PC-9 (cell line): ENCODE measurements at regions of chr11 and their contacts with region 1.

Region 1: GRCh38 chr11:2420502-2421225 is 20.1 kb downstream of the TSSC4 start:
- DNase-seq: peak; percentile 37 to 54
- H3K4me3 ChIP-seq: no peak overlapping the region
- H3K27ac ChIP-seq: no peak overlapping the region
- H3K4me1 ChIP-seq: no peaks in the 10 kb centered on the region
- H3K27me3 ChIP-seq: peaks cover 10% of the 10 kb centered on the region; the same call in 1 of the 2 replicates
- CTCF ChIP-seq: peak; percentile 77

Region 2: DNA sequence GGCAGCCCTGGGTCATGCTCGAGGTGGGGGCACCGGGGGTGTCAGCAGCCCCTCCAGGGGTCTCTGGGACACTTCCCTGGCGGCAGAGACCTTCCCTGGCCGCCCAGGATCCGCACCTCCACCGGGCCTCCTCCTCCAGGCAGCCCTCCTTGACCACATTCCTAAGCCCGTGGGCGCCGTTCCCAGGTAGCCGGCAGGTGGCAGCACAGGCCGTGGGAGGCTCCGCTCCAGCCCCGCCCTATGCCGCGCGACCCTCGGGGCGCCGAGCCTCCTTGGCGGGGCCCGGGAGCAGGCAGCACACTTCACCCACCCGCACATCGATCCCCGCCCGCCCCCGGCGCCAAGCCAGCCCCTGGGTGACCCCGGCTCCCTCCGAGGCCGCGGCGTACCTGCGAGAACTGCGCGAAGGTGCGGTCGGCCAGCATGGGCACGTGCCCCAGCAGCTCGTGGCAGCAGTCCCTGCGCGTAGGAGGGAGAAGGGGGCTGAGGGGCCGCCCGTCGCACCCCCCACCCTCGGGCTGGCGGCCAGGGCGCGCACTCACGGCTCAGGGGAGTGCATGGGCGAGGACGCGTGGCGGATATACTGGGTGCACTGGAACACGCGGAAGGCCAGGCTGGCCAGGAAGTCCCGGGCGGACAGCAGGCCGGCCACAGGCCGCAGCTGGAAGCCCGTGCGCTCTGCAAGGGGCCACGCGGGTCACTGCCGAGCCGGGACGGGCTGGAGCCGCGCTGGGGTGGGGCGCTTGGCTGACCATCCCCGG is 254.4 kb before region 1 on chr11:
- CTCF ChIA-PET with region 1: no interaction called
- POLR2A ChIA-PET with region 1: no interaction called
- intact Hi-C with region 1: loop called (anchors 5 kb)
- DNase-seq: no peak
- H3K4me3 ChIP-seq: no peak overlapping the region
- H3K27ac ChIP-seq: no peak overlapping the region
- H3K4me1 ChIP-seq: peaks cover 42% of the 10 kb centered on the region
- H3K27me3 ChIP-seq: no peaks in the 10 kb centered on the region
- CTCF ChIP-seq: peak; percentile 69

Region 3: GRCh38 chr11:2305140-2305840 is 115.4 kb before region 1 on chr11:
- CTCF ChIA-PET with region 1: interaction called, 29 read pairs
- POLR2A ChIA-PET with region 1: no interaction called
- intact Hi-C with region 1: loop called (anchors 1 kb)
- DNase-seq: peak in 1 of 2 experiments; percentile 64
- H3K4me3 ChIP-seq: no peak overlapping the region
- H3K27ac ChIP-seq: no peak overlapping the region
- H3K4me1 ChIP-seq: no peaks in the 10 kb centered on the region
- H3K27me3 ChIP-seq: no peaks in the 10 kb centered on the region
- CTCF ChIP-seq: peak; percentile 83

Region 4: DNA sequence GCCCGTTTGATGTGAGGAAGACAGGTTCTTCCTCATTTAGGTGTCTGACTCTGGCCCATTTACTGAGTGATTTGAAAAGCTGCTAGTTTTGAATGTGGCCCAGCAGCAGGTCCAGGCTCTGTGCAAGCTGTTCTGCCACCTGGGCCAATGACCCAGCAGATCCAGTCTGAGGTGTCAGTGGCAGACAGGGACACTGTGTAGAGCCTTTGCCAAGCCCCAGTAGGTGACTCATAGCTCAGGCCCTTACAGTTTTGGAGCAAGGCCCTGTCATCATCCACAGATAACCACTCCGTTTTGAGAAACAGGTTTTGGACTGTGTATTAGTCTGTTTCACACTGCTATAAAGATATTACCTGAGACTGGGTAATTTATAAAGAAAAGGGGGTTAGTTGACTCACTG is 94.9 kb before region 1 on chr11:
- CTCF ChIA-PET with region 1: no interaction called
- POLR2A ChIA-PET with region 1: no interaction called
- intact Hi-C with region 1: no loop called
- DNase-seq: peak; percentile 50 to 58
- H3K4me3 ChIP-seq: no peak overlapping the region
- H3K27ac ChIP-seq: no peak overlapping the region; the same call in 1 of the 2 replicates
- H3K4me1 ChIP-seq: no peaks in the 10 kb centered on the region
- H3K27me3 ChIP-seq: no peaks in the 10 kb centered on the region
- CTCF ChIP-seq: no peak

Region 5: GRCh38 chr11:2389377-2390026 is 31.2 kb before region 1 on chr11:
- CTCF ChIA-PET with region 1: no interaction called
- POLR2A ChIA-PET with region 1: no interaction called
- intact Hi-C with region 1: no loop called
- DNase-seq: no peak
- H3K4me3 ChIP-seq: no peak overlapping the region
- H3K27ac ChIP-seq: no peak overlapping the region
- H3K4me1 ChIP-seq: 0 out of 2 replicates have a peak, but pooled peaks cover 7% of the 10 kb centered on the region
- H3K27me3 ChIP-seq: no peaks in the 10 kb centered on the region
- CTCF ChIP-seq: no peak

Region 6: DNA sequence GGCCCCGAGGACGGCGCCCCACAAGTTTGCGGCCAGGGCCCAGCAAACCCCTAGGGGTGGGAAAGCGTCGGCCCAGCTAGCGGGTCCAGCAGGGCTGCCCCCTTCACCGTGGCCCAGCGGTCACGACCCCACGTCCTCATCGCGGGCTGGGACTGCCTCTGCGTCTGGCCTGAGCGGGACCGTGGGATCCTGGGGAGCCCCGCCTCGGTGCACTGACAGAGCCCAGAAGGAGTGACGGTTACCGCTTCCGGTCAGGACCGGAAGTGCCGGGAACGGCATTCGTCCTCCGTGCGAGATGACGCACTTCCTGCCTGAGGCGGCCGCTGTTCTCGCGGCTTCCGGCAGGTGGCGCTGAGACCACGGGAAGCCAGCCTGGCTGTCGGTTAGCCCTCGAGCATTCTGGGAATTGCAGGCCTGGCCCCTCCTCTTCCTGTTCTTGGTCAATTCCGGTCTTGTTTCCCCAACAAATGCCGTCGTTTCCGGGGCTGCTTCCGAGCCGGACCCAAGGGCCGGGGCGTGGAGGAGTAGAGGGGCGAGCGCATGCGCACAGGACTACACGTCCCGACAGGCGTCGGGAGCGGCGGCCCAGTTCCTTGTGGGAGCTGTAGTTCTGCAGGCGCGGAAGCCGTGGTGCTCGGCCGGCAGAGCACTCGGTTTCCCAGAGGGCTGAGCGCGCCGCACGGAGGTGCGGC is 20.4 kb before region 1 on chr11 and contains the start of gene TSSC4:
- CTCF ChIA-PET with region 1: no interaction called
- POLR2A ChIA-PET with region 1: no interaction called
- intact Hi-C with region 1: loop called (anchors 1 kb)
- DNase-seq: peak; percentile 96
- H3K4me3 ChIP-seq: peak within 1 kb of the TSS; percentile 89
- H3K27ac ChIP-seq: peak within 1 kb of the TSS; percentile 62
- H3K4me1 ChIP-seq: no peaks in the 10 kb centered on the region
- H3K27me3 ChIP-seq: no peaks in the 10 kb centered on the region
- CTCF ChIP-seq: peak; percentile 80
- total RNA-seq, gene TSSC4: 35.6 and 49.3 TPM in 2 replicates